Caco-2 (cell line): ENCODE measurements at regions of chr14 and their contacts with region 1.

Region 1: GRCh38 chr14:103158698-103159097 is 35.4 kb downstream of the TNFAIP2 start:
- DNase-seq: peak; percentile 80 to 87
- H3K4me3 ChIP-seq: no peak overlapping the region
- H3K4me3 Mint-ChIP-seq: no peak overlapping the region
- H3K27ac Mint-ChIP-seq: peak overlapping the region; percentile 67
- H3K4me1 ChIP-seq: peaks cover 24% of the 10 kb centered on the region
- H3K4me1 Mint-ChIP-seq: peaks cover 6% of the 10 kb centered on the region
- H3K27me3 ChIP-seq: no peaks in the 10 kb centered on the region
- H3K27me3 Mint-ChIP-seq: no peaks in the 10 kb centered on the region
- CTCF ChIP-seq: no peak

Region 2: DNA sequence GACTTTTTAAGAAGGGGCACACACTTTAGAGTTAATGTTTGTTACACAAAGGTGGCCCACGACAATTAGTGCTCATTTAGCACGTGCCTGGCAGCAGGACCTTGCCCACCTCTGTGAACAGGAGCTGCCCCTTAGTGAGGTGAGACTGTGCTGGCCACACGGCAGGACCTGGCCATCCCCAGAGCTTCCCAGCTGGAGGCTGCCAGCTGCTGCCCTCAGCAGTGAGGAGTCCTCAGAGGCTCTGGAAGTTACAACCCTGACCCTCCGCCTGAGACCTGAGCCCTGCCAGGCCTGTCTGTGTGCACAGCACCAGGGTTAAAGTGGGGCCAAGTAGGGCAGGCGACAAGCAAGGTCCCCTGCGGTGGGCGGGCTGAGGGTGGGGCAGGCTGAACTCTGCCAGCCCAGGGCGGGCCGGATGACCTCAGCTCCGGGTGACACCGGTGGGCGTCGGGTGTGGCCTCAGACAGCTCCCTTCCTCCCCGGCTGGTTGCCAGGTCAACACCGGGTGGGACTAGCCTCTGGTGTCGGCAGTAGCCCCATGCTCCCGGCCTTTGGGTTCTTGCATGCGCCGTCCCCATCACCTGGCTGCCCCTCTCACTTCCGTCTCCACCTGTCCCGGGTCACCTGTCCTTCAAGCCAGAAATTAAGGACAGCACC is 83.9 kb before region 1 on chr14:
- CTCF ChIA-PET with region 1: no interaction called
- POLR2A ChIA-PET with region 1: no interaction called
- intact Hi-C with region 1: no loop called
- DNase-seq: no peak
- H3K4me3 ChIP-seq: no peak overlapping the region
- H3K4me3 Mint-ChIP-seq: no peak overlapping the region
- H3K27ac Mint-ChIP-seq: no peak overlapping the region
- H3K4me1 ChIP-seq: no peaks in the 10 kb centered on the region
- H3K4me1 Mint-ChIP-seq: no peaks in the 10 kb centered on the region
- H3K27me3 ChIP-seq: no peaks in the 10 kb centered on the region
- H3K27me3 Mint-ChIP-seq: no peaks in the 10 kb centered on the region
- CTCF ChIP-seq: no peak

Region 3: GRCh38 chr14:103172920-103173319 is 14.2 kb after region 1 on chr14:
- CTCF ChIA-PET with region 1: interaction called, 3 read pairs
- POLR2A ChIA-PET with region 1: no interaction called
- intact Hi-C with region 1: loop called (anchors 1 kb)
- DNase-seq: peak in 1 of 2 experiments; percentile 39
- H3K4me3 ChIP-seq: no peak overlapping the region
- H3K4me3 Mint-ChIP-seq: no peak overlapping the region
- H3K27ac Mint-ChIP-seq: no peak overlapping the region
- H3K4me1 ChIP-seq: peaks cover 14% of the 10 kb centered on the region
- H3K4me1 Mint-ChIP-seq: peaks cover 6% of the 10 kb centered on the region
- H3K27me3 ChIP-seq: no peaks in the 10 kb centered on the region
- H3K27me3 Mint-ChIP-seq: no peaks in the 10 kb centered on the region
- CTCF ChIP-seq: no peak

Region 4: GRCh38 chr14:103260620-103261124 is 102.0 kb after region 1 on chr14:
- CTCF ChIA-PET with region 1: no interaction called
- POLR2A ChIA-PET with region 1: no interaction called
- intact Hi-C with region 1: no loop called
- DNase-seq: peak in 1 of 2 experiments; percentile 27
- H3K4me3 ChIP-seq: peak overlapping the region; percentile 37
- H3K4me3 Mint-ChIP-seq: peak overlapping the region; percentile 82
- H3K27ac Mint-ChIP-seq: peak overlapping the region; percentile 63
- H3K4me1 ChIP-seq: no peaks in the 10 kb centered on the region
- H3K4me1 Mint-ChIP-seq: peaks cover 6% of the 10 kb centered on the region
- H3K27me3 ChIP-seq: no peaks in the 10 kb centered on the region
- H3K27me3 Mint-ChIP-seq: no peaks in the 10 kb centered on the region
- CTCF ChIP-seq: no peak